ENCODE measurements at regions of chr15 and their contacts with region 1.

Region 1: GRCh38 chr15:58513726-58514336 is 82.0 kb downstream of the LIPC start:
- DNase-seq: no peak
- ATAC-seq: peak in 1 of 2 donors; percentile 22
- H3K4me3 ChIP-seq: no peak overlapping the region
- H3K27ac ChIP-seq: no peak overlapping the region
- H3K4me1 ChIP-seq: peaks cover 5 to 14% of the 10 kb centered on the region in 2 donors
- H3K27me3 ChIP-seq: no peaks in the 10 kb centered on the region
- CTCF ChIP-seq: no peak
- POLR2A ChIP-seq: no peak

Region 2: GRCh38 chr15:58495891-58496408 is 17.9 kb before region 1 on chr15:
- in situ Hi-C with region 1: no loop called
- intact Hi-C with region 1: loop called (anchors 2 kb)
- DNase-seq: no peak
- ATAC-seq: no peak
- H3K4me3 ChIP-seq: no peak overlapping the region
- H3K27ac ChIP-seq: no peak overlapping the region
- H3K4me1 ChIP-seq: peaks cover 12 to 16% of the 10 kb centered on the region in 2 donors
- H3K27me3 ChIP-seq: no peaks in the 10 kb centered on the region
- CTCF ChIP-seq: no peak
- POLR2A ChIP-seq: no peak

Region 3: DNA sequence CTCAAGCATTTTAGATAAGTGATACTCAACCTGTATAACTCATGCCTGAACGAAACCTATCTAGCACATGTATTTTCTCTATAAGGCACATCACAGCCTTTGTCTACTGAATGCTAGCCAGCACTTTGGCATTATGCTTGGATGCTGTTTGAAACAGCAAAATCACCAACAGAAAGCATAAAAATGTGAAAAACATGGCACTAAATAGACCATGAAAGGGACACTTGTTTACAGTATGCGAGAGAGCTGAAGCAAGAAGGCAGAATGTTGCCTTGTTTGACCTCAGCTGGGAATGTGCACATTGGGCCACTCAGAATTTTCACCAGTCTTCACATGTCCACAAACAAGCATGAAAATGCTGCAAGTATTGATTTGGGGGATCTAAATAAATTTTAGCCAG is 316.7 kb after region 1 on chr15:
- in situ Hi-C with region 1: no loop called
- intact Hi-C with region 1: no loop called
- DNase-seq: no peak
- ATAC-seq: no peak
- H3K4me3 ChIP-seq: no peak overlapping the region
- H3K27ac ChIP-seq: no peak overlapping the region
- H3K4me1 ChIP-seq: no peaks in the 10 kb centered on the region
- H3K27me3 ChIP-seq: no peaks in the 10 kb centered on the region
- CTCF ChIP-seq: no peak
- POLR2A ChIP-seq: no peak